ENCODE measurements at regions of chr19 and their contacts with region 1.

Region 1: DNA sequence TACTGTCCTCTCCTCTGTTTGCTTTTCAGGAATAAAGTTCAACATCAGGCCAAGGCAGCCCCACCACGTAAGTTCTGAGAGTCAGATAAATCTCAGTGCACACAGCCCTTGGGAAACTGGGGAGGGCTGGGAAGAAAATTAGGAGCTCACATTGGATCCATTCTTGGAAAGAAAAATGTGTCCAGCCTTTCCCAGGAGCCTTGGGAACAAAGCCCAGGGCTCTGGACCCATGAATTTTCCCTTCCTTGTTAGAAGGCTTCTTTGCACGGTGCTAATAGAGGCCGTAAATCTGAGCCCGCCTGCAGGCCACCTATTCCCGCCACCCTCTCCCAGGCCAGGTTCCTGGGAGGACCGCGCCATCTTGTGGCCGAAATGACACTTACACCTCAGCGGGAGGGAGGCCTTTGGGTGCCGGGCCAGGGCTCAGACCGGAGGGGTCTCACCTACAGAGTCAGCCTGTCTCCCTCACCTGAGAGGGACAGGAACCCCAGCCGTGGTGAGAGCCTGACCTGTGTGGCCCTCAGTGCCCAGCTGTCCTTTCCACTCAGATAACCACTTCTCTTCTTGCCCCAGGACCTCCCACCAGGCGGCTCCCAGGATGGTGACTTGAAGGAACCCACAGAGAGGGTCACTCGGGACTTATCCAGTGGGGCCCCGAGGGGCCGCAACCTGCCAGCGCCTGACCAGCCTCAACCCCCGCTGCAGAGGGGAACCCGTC is 25.1 kb upstream of the KCTD15 start:
- DNase-seq: peak; percentile 44 to 52 (median 45)
- H3K4me3 ChIP-seq: no peak overlapping the region
- H3K4me3 Mint-ChIP-seq: no peak overlapping the region
- H3K27ac ChIP-seq: no peak overlapping the region
- H3K27ac Mint-ChIP-seq: no peak overlapping the region
- H3K4me1 ChIP-seq: no peaks in the 10 kb centered on the region
- H3K4me1 Mint-ChIP-seq: no peaks in the 10 kb centered on the region
- H3K27me3 ChIP-seq: no peaks in the 10 kb centered on the region
- H3K27me3 Mint-ChIP-seq: peaks cover 0 to 3% (median 2%) of the 10 kb centered on the region in 3 donors
- CTCF ChIP-seq: peak; percentile 81

Region 2: DNA sequence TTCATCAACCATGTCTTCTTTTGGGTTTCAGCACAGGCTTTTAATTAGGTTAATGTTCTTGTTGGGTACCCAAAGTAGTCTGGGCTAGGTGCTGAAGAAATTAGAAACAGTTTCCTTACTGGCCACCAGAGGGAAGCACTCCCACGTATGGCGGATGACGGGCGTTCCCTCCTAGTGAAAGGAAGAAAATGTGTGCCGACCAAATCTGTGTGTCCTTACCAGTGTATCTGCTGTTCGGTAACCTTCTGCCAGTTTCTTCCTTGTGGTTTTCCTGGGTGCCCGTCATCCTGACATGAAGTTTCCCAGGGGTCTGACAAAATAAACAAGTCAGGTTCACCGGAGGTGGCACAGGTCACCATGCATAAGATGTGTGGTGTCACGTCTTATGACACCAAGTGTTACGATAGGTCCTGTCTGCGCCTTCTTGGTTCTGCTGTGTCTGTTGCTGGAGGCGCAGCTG is 645.6 kb before region 1 on chr19:
- intact Hi-C with region 1: loop called (anchors 5 to 10 kb)
- DNase-seq: peak; percentile 37 to 51 (median 51)
- H3K4me3 ChIP-seq: no peak overlapping the region
- H3K4me3 Mint-ChIP-seq: no peak overlapping the region
- H3K27ac ChIP-seq: no peak overlapping the region
- H3K27ac Mint-ChIP-seq: peak overlapping the region in 1 of 7 donors; percentile 32
- H3K4me1 ChIP-seq: peaks cover 3 to 4% of the 10 kb centered on the region in 2 donors
- H3K4me1 Mint-ChIP-seq: peaks cover 3% of the 10 kb centered on the region
- H3K27me3 ChIP-seq: no peaks in the 10 kb centered on the region
- H3K27me3 Mint-ChIP-seq: no peaks in the 10 kb centered on the region
- CTCF ChIP-seq: peak; percentile 81

Region 3: GRCh38 chr19:33430674-33431277 is 340.8 kb before region 1 on chr19:
- intact Hi-C with region 1: loop called in 1 of 2 experiments (anchors 2 kb)
- DNase-seq: peak; percentile 23 to 43 (median 37)
- H3K4me3 ChIP-seq: no peak overlapping the region
- H3K4me3 Mint-ChIP-seq: no peak overlapping the region
- H3K27ac ChIP-seq: no peak overlapping the region
- H3K27ac Mint-ChIP-seq: peak overlapping the region in 2 of 7 donors; percentile 43 to 83
- H3K4me1 ChIP-seq: no peaks in the 10 kb centered on the region
- H3K4me1 Mint-ChIP-seq: peaks cover 4% of the 10 kb centered on the region
- H3K27me3 ChIP-seq: no peaks in the 10 kb centered on the region
- H3K27me3 Mint-ChIP-seq: peaks cover 3 to 5% (median 4%) of the 10 kb centered on the region in 3 donors
- CTCF ChIP-seq: peak; percentile 83

Region 4: GRCh38 chr19:33819880-33820781 is 48.6 kb after region 1 on chr19:
- intact Hi-C with region 1: no loop called
- DNase-seq: peak; percentile 90 to 93 (median 90)
- H3K4me3 ChIP-seq: peak overlapping the region; percentile 13 to 84 (median 57)
- H3K4me3 Mint-ChIP-seq: peak overlapping the region; percentile 84 to 93
- H3K27ac ChIP-seq: peak overlapping the region; percentile 91 to 96
- H3K27ac Mint-ChIP-seq: peak overlapping the region; percentile 92 to 97 (median 96)
- H3K4me1 ChIP-seq: peaks cover 61 to 70% of the 10 kb centered on the region in 2 donors
- H3K4me1 Mint-ChIP-seq: peaks cover 56% of the 10 kb centered on the region
- H3K27me3 ChIP-seq: no peaks in the 10 kb centered on the region
- H3K27me3 Mint-ChIP-seq: peaks cover 0 to 2% (median 0%) of the 10 kb centered on the region in 3 donors
- CTCF ChIP-seq: no peak